ENCODE measurements at regions of chr1 and their contacts with region 1.

Region 1: DNA sequence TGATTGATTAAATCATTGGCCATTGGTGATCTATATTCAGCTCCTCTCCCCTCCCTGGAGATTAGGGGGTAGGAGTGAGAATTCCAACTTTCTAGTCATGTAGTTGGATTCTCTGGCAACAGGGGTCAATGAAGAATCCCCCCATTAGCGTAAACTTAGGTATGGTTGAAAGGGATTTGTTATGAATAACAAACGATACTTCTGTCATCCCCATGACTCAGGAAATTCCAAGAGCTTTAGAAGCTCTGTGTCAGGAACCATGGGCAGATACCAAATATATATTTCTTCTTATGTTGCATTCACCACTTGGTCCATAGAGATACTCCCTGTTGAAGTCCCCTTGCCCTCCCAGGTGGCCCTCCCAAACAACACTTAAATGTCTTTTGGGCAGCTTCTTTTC is 124.5 kb downstream of the DNM3 start:
- DNase-seq: no peak

Region 2: DNA sequence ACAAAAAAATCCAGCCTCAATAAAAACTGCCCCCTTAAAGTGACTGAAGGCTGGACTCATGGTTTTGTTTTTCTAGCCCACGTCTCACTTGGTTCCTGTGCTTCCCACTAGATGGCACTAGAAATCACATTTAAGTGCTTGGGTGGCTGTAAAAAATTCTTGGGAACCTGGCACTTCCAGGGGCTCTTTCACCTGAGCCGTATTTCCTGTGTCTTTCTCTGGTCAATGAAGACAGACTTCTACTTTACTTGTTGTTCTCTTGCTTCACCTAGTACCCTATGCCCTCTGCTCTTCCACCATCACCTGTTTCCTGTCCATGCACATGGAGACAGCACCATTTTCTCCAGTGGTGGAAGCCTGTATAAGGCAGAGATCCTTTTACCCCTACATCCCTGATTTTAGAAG is 164.3 kb before region 1 on chr1:
- in situ Hi-C with region 1: loop called (anchors 25 kb)
- DNase-seq: peak; percentile 88

Measured in G401 (cell line).